ENCODE measurements at regions of chr1 and their contacts with region 1.

Region 1: GRCh38 chr1:145845514-145846161 is at the start of gene NUDT17:
- DNase-seq: peak; percentile 24
- H3K4me3 ChIP-seq: peak within 1 kb of the TSS; percentile 70
- H3K27ac ChIP-seq: peak within 1 kb of the TSS; percentile 31
- H3K27me3 ChIP-seq: no peaks in the 10 kb centered on the region
- CTCF ChIP-seq: peak; percentile 93
- polyA plus RNA-seq, gene NUDT17: 3.3 and 3.7 TPM in 2 replicates

Region 2: GRCh38 chr1:145757420-145757819 is 88.2 kb before region 1 on chr1:
- CTCF ChIA-PET with region 1: no interaction called
- POLR2A ChIA-PET with region 1: no interaction called
- DNase-seq: no peak
- H3K4me3 ChIP-seq: no peak overlapping the region
- H3K27ac ChIP-seq: no peak overlapping the region
- H3K27me3 ChIP-seq: no peaks in the 10 kb centered on the region
- CTCF ChIP-seq: no peak

Region 3: DNA sequence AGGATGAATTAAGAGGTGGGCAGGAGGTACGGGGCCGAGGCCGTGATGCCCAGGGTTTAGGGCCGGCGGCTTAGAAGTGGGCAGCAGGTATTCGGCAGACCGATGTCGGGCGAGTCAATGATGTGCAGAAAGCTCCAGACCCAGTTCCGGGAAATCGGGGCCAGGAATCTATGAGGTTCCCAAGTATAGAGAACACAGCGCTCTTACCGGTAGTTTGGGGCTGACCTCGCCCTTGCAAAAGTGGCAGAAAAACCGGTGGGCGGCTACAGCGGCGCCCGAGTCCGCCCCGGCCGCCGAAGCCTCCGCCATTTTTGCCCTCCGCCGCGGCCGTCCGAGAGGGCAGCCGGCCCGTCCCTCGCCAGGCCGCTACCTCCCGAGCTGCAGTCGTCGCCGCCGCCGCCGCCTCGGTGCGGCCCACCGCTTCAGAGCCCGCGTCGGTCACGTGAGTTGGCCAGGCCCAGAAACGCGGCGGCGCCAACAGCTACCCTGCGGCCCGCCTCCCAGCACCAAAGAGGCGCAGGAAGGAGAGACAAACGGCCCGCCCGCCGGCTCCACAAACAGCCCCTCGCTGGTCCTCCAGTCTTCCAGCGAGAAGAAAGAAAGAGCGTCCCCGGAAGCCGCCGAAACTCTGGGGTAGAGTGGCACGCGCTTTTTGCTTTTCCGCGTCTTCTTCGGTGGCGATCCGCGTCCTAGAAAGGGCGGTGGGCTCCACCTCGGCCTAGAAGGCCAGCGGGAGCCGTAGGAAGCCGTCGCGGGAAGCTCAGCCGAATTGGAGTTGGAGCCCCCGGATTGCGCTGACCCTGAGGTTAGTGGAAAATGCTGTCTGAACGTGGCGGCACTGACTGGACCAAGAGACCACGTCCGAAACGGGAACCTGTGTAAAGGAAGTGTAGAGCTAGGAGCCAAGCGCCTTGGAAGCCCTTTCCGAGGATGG is 21.8 kb before region 1 on chr1 and contains the starts of genes POLR3C and RNF115:
- CTCF ChIA-PET with region 1: interaction called, 31 read pairs
- POLR2A ChIA-PET with region 1: interaction called, 8 read pairs
- DNase-seq: peak; percentile 73
- H3K4me3 ChIP-seq: peak within 1 kb of the TSS; percentile 67
- H3K27ac ChIP-seq: peak within 1 kb of the TSS; percentile 96
- H3K27me3 ChIP-seq: no peaks in the 10 kb centered on the region
- CTCF ChIP-seq: no peak
- polyA plus RNA-seq, gene POLR3C: 67.5 and 70.6 TPM in 2 replicates
- polyA plus RNA-seq, gene RNF115: 30.0 and 32.9 TPM in 2 replicates

Region 4: GRCh38 chr1:145871994-145872924 is 26.6 kb after region 1 on chr1:
- CTCF ChIA-PET with region 1: interaction called, 21 read pairs
- POLR2A ChIA-PET with region 1: interaction called, 8 read pairs
- DNase-seq: no peak
- H3K4me3 ChIP-seq: peak overlapping the region; percentile 59
- H3K27ac ChIP-seq: peak overlapping the region; percentile 77
- H3K27me3 ChIP-seq: peaks cover 8% of the 10 kb centered on the region
- CTCF ChIP-seq: no peak

Region 5: GRCh38 chr1:145918144-145918992 is 72.7 kb after region 1 on chr1 and contains the start of gene PEX11B:
- CTCF ChIA-PET with region 1: interaction called, 11 read pairs
- POLR2A ChIA-PET with region 1: interaction called, 5 read pairs
- DNase-seq: peak; percentile 65
- H3K4me3 ChIP-seq: peak within 1 kb of the TSS; percentile 95
- H3K27ac ChIP-seq: peak within 1 kb of the TSS; percentile 84
- H3K27me3 ChIP-seq: no peaks in the 10 kb centered on the region
- CTCF ChIP-seq: no peak
- polyA plus RNA-seq, gene PEX11B: 44.2 and 51.1 TPM in 2 replicates

Region 6: DNA sequence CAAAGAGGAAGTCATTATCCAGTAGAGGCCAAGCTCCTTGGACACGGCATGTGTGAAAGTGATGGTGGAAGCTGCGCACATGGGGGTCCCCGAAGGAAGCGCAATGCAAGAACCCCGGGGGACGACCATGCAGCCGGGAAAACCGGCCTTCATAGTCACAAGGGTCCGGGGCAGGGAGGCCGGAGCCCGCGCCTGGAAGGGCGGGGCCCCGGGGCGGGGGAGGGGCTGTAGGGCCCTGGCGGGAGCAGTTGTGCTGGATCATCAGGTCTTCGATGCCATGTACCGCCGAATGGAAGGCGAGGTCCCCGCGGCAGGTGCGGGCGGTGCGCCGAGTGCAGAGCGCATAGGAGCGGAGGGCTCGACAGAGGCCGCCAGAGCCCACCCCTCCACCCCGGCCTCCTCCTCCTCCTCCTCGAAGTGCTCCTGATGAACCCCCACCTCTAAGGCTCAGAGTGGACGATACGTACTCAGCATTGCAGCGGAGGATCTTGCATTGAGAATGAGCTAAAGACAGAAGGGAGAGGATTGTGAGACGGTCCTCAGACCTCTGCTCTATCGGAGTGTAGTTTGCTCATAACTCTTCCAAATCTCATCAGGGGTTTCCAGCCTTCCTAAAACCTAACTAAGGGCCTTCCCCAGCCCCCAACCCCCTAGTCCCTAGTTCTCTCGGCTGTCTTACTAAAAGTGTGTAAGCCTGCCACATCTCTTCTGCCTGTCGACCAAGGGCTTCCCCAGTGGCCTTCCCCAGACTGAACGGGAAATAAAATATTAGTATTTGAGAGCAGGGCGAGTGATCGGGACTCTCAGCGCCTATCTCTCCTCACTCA is 173.8 kb after region 1 on chr1:
- CTCF ChIA-PET with region 1: interaction called, 70 read pairs
- POLR2A ChIA-PET with region 1: no interaction called
- DNase-seq: no peak
- H3K4me3 ChIP-seq: no peak overlapping the region
- H3K27ac ChIP-seq: no peak overlapping the region
- H3K27me3 ChIP-seq: peaks cover 36% of the 10 kb centered on the region
- CTCF ChIP-seq: no peak